Ascending aorta (tissue), 2 donors: ENCODE measurements at regions of chr19 and their contacts with region 1.

Region 1: GRCh38 chr19:45001087-45001739 is at the start of gene RELB:
- DNase-seq: peak; percentile 73 to 97
- H3K4me3 ChIP-seq: peak within 1 kb of the TSS; percentile 82 to 100
- H3K27ac ChIP-seq: peak within 1 kb of the TSS; percentile 99 to 100
- H3K4me1 ChIP-seq: peaks cover 0 to 5% of the 10 kb centered on the region in 2 donors
- H3K27me3 ChIP-seq: no peaks in the 10 kb centered on the region
- CTCF ChIP-seq: no peak
- total RNA-seq, gene RELB: 8.7 TPM

Region 2: GRCh38 chr19:44890366-44891015 is 110.7 kb before region 1 on chr19:
- intact Hi-C with region 1: loop called (anchors 2 kb)
- DNase-seq: peak; percentile 100
- H3K4me3 ChIP-seq: peak overlapping the region; percentile 65 to 72
- H3K27ac ChIP-seq: peak overlapping the region; percentile 92 to 97
- H3K4me1 ChIP-seq: peaks cover 12 to 19% of the 10 kb centered on the region in 2 donors
- H3K27me3 ChIP-seq: no peaks in the 10 kb centered on the region
- CTCF ChIP-seq: no peak

Region 3: DNA sequence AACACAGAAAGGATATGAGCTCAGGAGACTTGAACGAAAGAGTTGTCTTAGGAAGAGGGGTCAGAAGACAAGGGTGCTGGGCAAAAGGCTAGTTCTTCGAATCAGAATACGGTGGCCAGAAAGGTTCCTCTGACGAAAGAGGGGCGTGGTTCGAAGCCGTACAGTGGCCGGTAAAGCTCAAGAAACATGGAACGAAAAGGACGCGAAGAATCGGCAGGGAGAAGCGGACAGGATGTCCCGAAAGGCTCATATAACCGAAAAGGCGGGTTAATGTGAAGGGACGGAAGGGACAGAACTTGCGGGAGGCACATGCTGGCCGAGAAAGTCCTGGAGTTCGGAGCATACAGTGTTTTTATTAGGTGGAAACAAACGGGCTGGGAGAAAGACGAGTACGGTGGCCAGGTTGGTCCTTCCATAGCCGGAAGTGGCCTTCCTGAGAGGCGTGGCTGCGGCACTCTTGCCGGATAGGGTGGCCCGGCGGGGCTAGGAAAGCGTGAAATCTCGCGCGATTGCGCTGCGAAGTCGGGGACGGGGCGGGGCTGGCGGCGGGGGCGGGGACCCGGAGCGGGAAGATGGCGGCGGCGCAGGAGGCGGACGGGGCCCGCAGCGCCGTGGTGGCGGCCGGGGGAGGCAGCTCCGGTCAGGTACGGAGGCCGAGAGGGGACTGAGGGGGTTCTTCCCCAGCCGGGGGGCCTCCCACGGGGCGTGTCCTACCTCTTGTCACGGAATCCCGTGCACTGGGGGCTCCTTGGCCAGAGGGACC is 46.2 kb before region 1 on chr19 and contains the start of gene CLPTM1:
- intact Hi-C with region 1: loop called (anchors 1 kb)
- DNase-seq: peak; percentile 87 to 98
- H3K4me3 ChIP-seq: peak within 1 kb of the TSS; percentile 73 to 98
- H3K27ac ChIP-seq: peak within 1 kb of the TSS; percentile 89 to 91
- H3K4me1 ChIP-seq: peaks cover 10 to 30% of the 10 kb centered on the region in 2 donors
- H3K27me3 ChIP-seq: no peaks in the 10 kb centered on the region
- CTCF ChIP-seq: peak in 1 of 3 experiments; percentile 28
- total RNA-seq, gene CLPTM1: 65.2 TPM

Region 4: DNA sequence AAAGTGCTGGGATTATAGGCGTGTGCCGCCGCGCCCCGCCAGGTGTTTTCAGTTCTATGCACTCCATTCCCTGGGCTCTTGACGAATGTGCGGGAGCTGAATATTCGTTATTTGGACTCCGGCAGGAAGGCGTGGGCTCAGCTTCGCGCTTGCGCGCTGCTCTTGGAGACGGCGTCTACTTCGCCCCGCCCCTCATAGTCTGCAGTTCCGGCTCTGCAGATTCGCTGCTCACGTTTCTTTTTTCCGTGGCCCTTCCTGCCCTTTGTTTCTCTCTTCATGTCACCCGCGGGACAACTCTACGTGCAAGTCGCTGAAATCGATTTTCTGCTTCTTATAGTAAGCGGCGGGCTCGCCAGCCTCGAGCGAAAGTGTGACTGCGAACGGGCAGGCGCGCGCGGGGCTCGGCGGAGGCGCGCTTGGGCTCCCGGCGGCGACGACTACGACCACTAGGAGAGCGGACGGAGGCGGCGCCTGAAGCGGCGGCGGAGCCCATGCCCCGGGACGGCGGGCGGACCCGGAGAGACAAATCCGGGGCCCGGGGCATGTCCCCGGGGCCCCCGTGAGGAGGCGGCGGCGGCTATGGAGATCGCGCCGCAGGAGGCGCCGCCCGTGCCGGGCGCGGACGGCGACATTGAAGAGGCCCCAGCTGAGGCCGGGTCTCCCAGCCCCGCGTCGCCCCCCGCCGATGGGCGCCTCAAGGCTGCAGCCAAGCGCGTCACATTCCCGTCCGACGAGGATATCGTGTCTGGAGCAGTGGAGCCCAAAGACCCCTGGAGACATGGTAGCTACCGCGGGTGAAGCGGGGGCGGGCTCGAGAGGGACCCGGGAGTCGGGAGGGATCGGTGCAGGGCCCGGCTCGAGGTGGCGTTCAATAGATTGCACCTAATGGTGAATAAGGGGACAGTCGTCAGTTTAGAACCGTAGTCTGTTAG is 91.8 kb after region 1 on chr19 and contains the start of gene PPP1R37:
- intact Hi-C with region 1: loop called (anchors 1 kb)
- DNase-seq: peak; percentile 71 to 95
- H3K4me3 ChIP-seq: peak within 1 kb of the TSS; percentile 96 to 99
- H3K27ac ChIP-seq: peak within 1 kb of the TSS; percentile 83 to 88
- H3K4me1 ChIP-seq: peaks cover 19 to 24% of the 10 kb centered on the region in 2 donors
- H3K27me3 ChIP-seq: no peaks in the 10 kb centered on the region
- CTCF ChIP-seq: peak in 2 of 3 experiments; percentile 40 to 62
- total RNA-seq, gene PPP1R37: 17.6 TPM

Region 5: GRCh38 chr19:45506246-45506990 is 505.2 kb after region 1 on chr19:
- intact Hi-C with region 1: loop called (anchors 2 kb)
- DNase-seq: peak; percentile 73 to 94
- H3K4me3 ChIP-seq: peak overlapping the region; percentile 97 to 99
- H3K27ac ChIP-seq: peak overlapping the region; percentile 90 to 96
- H3K4me1 ChIP-seq: peaks cover 2 to 9% of the 10 kb centered on the region in 2 donors
- H3K27me3 ChIP-seq: no peaks in the 10 kb centered on the region
- CTCF ChIP-seq: peak in 2 of 3 experiments; percentile 29 to 46